CD4-positive, alpha-beta T cell (primary cell): ENCODE measurements at regions of chr12 and their contacts with region 1.

Region 1: DNA sequence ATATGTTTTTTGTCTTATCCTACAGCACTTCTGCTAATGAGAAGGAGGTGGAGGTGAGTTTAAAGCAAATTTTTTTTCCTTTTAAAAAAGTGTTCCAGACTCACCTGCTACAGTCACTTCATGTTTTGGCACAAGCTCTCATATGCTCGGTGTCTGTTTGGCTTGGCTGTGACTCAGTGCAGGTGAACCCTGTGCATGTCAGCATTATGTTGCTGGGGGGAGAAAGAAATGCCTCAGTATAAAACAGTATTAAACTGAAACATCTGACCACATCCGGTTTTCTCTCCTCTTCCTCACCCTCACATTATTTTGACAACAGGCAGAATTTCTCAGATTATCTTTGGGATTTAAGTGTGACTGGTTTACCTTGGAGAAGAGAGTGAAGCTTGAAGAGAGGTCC is 105.2 kb downstream of the DNAI7 start:
- DNase-seq: peak in 2 of 14 experiments; percentile 9 to 22
- ATAC-seq: no peak
- H3K4me3 ChIP-seq: no peak overlapping the region
- H3K4me3 Mint-ChIP-seq: no peak overlapping the region
- H3K27ac ChIP-seq: no peak overlapping the region
- H3K27ac Mint-ChIP-seq: peak overlapping the region; percentile 63
- H3K4me1 ChIP-seq: no peaks in the 10 kb centered on the region
- H3K4me1 Mint-ChIP-seq: peaks cover 22% of the 10 kb centered on the region
- H3K27me3 ChIP-seq: no peaks in the 10 kb centered on the region
- H3K27me3 Mint-ChIP-seq: no peaks in the 10 kb centered on the region
- CTCF ChIP-seq: no peak

Region 2: GRCh38 chr12:25041006-25041741 is 48.6 kb before region 1 on chr12:
- CTCF ChIA-PET with region 1: no interaction called
- POLR2A ChIA-PET with region 1: no interaction called
- intact Hi-C with region 1: loop called in 1 of 2 experiments (anchors 5 kb)
- DNase-seq: no peak
- ATAC-seq: no peak
- H3K4me3 ChIP-seq: no peak overlapping the region
- H3K4me3 Mint-ChIP-seq: no peak overlapping the region
- H3K27ac ChIP-seq: no peak overlapping the region
- H3K27ac Mint-ChIP-seq: no peak overlapping the region
- H3K4me1 ChIP-seq: no peaks in the 10 kb centered on the region
- H3K4me1 Mint-ChIP-seq: no peaks in the 10 kb centered on the region
- H3K27me3 ChIP-seq: no peaks in the 10 kb centered on the region
- H3K27me3 Mint-ChIP-seq: peaks cover 11% of the 10 kb centered on the region
- CTCF ChIP-seq: no peak

Region 3: GRCh38 chr12:25101092-25101445 is 11.3 kb after region 1 on chr12:
- CTCF ChIA-PET with region 1: no interaction called
- POLR2A ChIA-PET with region 1: no interaction called
- intact Hi-C with region 1: loop called in 1 of 2 experiments (anchors 2 kb)
- DNase-seq: no peak
- ATAC-seq: no peak
- H3K4me3 ChIP-seq: no peak overlapping the region
- H3K4me3 Mint-ChIP-seq: no peak overlapping the region
- H3K27ac ChIP-seq: no peak overlapping the region
- H3K27ac Mint-ChIP-seq: no peak overlapping the region
- H3K4me1 ChIP-seq: no peaks in the 10 kb centered on the region
- H3K4me1 Mint-ChIP-seq: no peaks in the 10 kb centered on the region
- H3K27me3 ChIP-seq: no peaks in the 10 kb centered on the region
- H3K27me3 Mint-ChIP-seq: no peaks in the 10 kb centered on the region
- CTCF ChIP-seq: no peak

Region 4: DNA sequence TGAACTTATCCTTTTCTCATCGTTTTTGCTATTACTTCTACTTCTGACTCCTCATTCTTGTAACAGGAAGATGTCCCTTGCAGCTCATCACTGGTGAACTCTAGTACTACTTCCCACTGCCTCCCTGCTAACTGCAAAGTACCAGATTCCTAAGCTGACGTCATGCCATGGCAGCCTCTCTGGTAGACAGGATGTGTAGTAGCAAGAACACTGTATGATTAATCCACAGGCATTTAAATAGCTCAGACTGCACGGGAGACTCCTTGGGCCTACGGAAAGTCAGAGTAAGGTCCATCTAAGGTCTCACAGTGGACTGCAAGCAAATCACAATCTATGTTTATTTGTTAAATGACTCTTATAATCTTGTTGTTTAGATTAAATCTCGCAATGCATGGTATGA is 61.7 kb after region 1 on chr12:
- CTCF ChIA-PET with region 1: no interaction called
- POLR2A ChIA-PET with region 1: no interaction called
- intact Hi-C with region 1: no loop called
- DNase-seq: no peak
- ATAC-seq: no peak
- H3K4me3 ChIP-seq: no peak overlapping the region
- H3K4me3 Mint-ChIP-seq: no peak overlapping the region
- H3K27ac ChIP-seq: no peak overlapping the region
- H3K27ac Mint-ChIP-seq: no peak overlapping the region
- H3K4me1 ChIP-seq: no peaks in the 10 kb centered on the region
- H3K4me1 Mint-ChIP-seq: peaks cover 7% of the 10 kb centered on the region
- H3K27me3 ChIP-seq: no peaks in the 10 kb centered on the region
- H3K27me3 Mint-ChIP-seq: no peaks in the 10 kb centered on the region
- CTCF ChIP-seq: no peak

Region 5: DNA sequence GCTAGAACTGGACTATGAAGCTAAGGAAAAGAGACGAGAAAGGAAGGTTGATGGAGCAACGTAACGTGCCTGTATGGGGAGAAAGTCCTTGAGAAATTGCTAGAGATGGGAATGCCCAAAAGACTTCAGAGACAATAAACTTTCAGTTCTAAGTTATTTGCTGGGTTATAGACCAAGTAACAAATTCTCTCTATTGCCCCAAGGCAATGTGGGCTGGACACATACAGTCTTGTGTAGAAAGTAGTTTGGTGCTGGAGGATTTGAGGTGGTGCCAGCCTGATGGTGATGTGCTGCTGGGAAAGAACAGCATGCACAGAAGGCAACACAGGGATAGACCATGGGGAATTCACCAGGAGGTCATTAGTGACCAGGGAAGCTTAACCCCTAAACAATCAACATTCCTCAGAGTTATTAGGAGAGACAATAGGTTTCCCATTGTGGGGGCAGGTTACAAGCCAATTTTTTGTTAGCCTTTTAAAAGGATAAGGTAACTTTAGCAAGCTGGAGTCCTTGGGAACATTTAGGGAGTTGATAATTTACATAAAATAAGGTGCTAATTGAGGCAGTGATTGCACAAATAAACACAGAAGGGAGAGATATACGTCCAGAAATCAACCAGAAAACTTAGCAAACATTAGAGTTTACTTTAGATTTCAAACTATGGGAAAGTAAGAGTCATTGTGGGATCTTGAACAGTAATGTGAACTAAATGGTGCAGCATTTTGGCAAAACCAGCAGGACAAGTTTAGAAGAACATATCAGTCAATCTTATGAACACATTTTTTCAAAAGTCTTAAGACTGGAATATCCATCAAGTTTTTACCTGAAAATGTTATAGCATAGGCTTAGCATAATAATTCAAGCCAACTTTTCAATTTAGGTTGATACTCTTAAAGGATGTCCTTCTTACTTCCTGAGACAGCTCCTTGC is 401.9 kb after region 1 on chr12:
- CTCF ChIA-PET with region 1: no interaction called
- POLR2A ChIA-PET with region 1: no interaction called
- intact Hi-C with region 1: no loop called
- DNase-seq: no peak
- ATAC-seq: no peak
- H3K4me3 ChIP-seq: no peak overlapping the region
- H3K4me3 Mint-ChIP-seq: no peak overlapping the region
- H3K27ac ChIP-seq: no peak overlapping the region
- H3K27ac Mint-ChIP-seq: no peak overlapping the region
- H3K4me1 ChIP-seq: no peaks in the 10 kb centered on the region
- H3K4me1 Mint-ChIP-seq: peaks cover 12% of the 10 kb centered on the region
- H3K27me3 ChIP-seq: no peaks in the 10 kb centered on the region
- H3K27me3 Mint-ChIP-seq: peaks cover 4% of the 10 kb centered on the region
- CTCF ChIP-seq: no peak